ENCODE measurements at regions of chr1 and their contacts with region 1.

Region 1: GRCh38 chr1:206583707-206584648 is 28.3 kb downstream of the EIF2D start:
- DNase-seq: peak; percentile 94
- H3K4me3 ChIP-seq: no peak overlapping the region
- H3K27ac ChIP-seq: no peak overlapping the region
- H3K4me1 ChIP-seq: peaks cover 0 to 41% (median 30%) of the 10 kb centered on the region in 4 donors
- H3K27me3 ChIP-seq: no peaks in the 10 kb centered on the region
- CTCF ChIP-seq: peak; percentile 87 to 94 (median 92)
- EP300 ChIP-seq: no peak
- POLR2A ChIP-seq: no peak

Region 2: DNA sequence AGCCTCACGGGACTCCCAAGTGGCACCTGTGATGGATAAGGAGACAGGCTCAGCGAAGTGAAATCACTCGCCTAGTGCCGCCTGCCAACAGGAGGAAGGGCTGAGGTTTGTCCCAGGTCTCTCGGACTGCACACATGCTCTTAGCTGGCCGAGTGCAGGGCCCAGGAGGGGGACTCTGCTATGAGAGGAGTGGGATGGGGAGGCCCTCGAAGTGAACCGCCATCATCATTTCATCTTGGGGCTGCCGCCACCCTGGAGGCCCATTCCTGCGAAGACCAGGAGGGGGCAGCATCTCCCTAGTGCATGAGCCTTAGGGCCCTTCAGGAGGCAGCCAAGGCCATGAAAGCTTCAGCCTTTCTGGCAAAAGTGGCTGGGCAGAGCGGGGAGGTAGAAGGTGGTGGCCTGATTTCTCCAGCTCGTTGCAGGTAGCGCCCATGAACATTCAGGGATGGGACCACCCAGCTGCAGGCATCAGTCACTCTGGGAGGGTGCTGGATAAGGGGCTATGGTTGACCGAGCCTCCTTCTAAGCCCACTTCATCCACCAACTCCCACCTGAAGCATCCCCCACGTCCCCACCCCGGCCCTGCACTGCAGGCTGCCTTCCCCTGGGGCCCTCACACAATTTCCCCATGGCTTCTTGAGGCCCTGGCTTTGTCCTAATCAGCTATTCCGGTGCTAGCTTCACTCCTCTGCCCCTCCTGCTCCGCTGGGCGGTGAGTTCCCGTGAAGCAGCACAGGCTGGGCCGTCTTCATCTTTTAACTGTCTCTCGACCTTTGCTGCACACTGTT is 93.8 kb before region 1 on chr1:
- intact Hi-C with region 1: loop called (anchors 1 kb)
- DNase-seq: no peak
- H3K4me3 ChIP-seq: no peak overlapping the region
- H3K27ac ChIP-seq: no peak overlapping the region
- H3K4me1 ChIP-seq: peaks cover 2 to 14% (median 9%) of the 10 kb centered on the region in 4 donors
- H3K27me3 ChIP-seq: no peaks in the 10 kb centered on the region
- CTCF ChIP-seq: peak; percentile 80 to 93 (median 85)
- EP300 ChIP-seq: no peak
- POLR2A ChIP-seq: no peak

Measured in esophagus muscularis mucosa (tissue), 4 donors.